Endothelial cell of umbilical vein (primary cell): ENCODE measurements at regions of chr2 and their contacts with region 1.

Region 1: GRCh38 chr2:191677646-191678436 is at the start of gene NABP1:
- DNase-seq: peak; percentile 97
- H3K4me3 ChIP-seq: peak within 1 kb of the TSS; percentile 54 to 93 (median 88)
- H3K27ac ChIP-seq: peak within 1 kb of the TSS; percentile 97
- H3K4me1 ChIP-seq: peaks cover 48% of the 10 kb centered on the region
- H3K27me3 ChIP-seq: no peaks in the 10 kb centered on the region
- CTCF ChIP-seq: no peak
- POLR2A ChIP-seq: peak; percentile 100
- total RNA-seq, gene NABP1: 42.4 and 47.6 TPM in 2 replicates

Region 2: GRCh38 chr2:191382801-191383200 is 295.0 kb before region 1 on chr2:
- CTCF ChIA-PET with region 1: no interaction called
- POLR2A ChIA-PET with region 1: no interaction called
- dilution Hi-C with region 1: no loop called
- intact Hi-C with region 1: loop called (anchors 5 kb)
- DNase-seq: peak; percentile 78
- H3K4me3 ChIP-seq: no peak overlapping the region
- H3K27ac ChIP-seq: peak overlapping the region; percentile 23
- H3K4me1 ChIP-seq: peaks cover 53% of the 10 kb centered on the region
- H3K27me3 ChIP-seq: no peaks in the 10 kb centered on the region
- CTCF ChIP-seq: no peak
- POLR2A ChIP-seq: no peak

Region 3: GRCh38 chr2:191611614-191612013 is 66.2 kb before region 1 on chr2:
- CTCF ChIA-PET with region 1: no interaction called
- POLR2A ChIA-PET with region 1: interaction called, 4 read pairs
- dilution Hi-C with region 1: no loop called
- intact Hi-C with region 1: loop called (anchors 2 kb)
- DNase-seq: no peak
- H3K4me3 ChIP-seq: no peak overlapping the region
- H3K27ac ChIP-seq: no peak overlapping the region
- H3K4me1 ChIP-seq: peaks cover 9% of the 10 kb centered on the region
- H3K27me3 ChIP-seq: no peaks in the 10 kb centered on the region
- CTCF ChIP-seq: no peak
- POLR2A ChIP-seq: no peak

Region 4: DNA sequence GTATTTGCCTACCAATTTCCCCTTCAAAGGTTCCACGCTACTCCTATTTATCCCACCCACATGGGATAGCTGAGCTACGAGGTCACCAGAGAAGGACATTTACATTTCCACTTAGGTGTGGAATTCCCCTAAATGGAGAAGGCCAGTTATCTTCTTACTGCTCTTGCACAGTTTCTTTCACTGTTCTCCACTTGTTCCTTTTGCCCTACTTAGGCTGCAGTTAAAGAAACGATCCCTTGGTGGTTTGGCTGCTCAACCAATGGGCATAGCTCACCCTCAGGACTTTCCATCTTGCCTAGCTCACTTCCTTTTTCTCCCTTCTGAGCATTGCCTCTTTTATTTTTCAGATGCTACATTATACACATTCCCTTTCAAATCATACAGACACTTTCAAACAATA is 11.1 kb before region 1 on chr2:
- CTCF ChIA-PET with region 1: interaction called, 4 read pairs
- POLR2A ChIA-PET with region 1: interaction called, 15 read pairs
- dilution Hi-C with region 1: no loop called
- intact Hi-C with region 1: no loop called
- DNase-seq: no peak
- H3K4me3 ChIP-seq: no peak overlapping the region
- H3K27ac ChIP-seq: no peak overlapping the region
- H3K4me1 ChIP-seq: peaks cover 12% of the 10 kb centered on the region
- H3K27me3 ChIP-seq: no peaks in the 10 kb centered on the region
- CTCF ChIP-seq: no peak
- POLR2A ChIP-seq: no peak

Region 5: DNA sequence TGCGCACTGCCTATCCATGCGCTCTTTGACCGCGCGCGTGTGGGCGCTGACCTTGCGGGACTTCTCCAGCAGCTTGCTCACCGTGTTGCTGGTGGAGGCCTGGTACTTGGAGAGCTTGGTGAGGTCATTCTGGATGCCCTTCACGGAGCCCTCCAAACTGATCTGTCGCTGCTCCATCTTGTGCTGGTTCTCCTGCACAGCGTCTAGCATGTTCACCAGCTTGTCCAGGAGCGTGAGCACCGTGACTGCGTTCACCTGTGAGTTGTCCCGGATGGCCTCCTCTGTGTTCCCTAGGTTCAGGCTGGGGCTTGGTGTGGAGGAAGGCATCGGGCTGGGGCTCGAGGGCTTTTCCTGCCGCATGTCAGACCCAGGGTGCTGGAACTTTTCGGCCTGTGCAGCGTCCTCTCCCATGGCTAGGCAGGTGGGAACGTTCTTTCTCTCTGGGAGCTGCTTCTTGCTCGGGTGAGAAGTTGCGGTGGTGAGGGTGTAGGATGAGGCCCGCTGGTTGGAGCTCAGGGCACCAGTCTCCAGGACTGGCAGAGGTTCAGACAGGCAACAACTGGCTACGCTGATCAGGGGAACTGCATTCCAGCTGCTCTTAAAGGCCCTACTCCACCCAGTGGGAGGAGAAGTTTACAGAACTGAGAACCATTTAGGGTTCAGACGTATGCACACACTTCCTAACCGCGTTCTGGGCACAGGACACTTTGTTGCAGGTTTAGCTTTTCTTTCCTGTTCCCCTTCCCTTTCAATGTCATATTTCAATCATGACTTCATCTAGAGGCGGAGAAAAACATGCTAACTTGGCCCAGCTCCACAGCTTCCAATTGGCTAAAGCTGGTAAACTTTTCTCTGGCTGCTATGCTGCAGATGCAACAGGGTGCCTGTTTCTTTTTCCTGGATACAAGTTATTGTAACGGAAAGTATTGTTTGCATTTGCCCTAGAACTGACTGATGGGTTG is 169.0 kb after region 1 on chr2 and contains the start of gene CAVIN2:
- CTCF ChIA-PET with region 1: no interaction called
- POLR2A ChIA-PET with region 1: interaction called, 5 read pairs
- dilution Hi-C with region 1: no loop called
- intact Hi-C with region 1: loop called (anchors 5 kb)
- DNase-seq: peak; percentile 100
- H3K4me3 ChIP-seq: peak within 1 kb of the TSS; percentile 82 to 99 (median 95)
- H3K27ac ChIP-seq: peak within 1 kb of the TSS; percentile 76
- H3K4me1 ChIP-seq: peaks cover 21% of the 10 kb centered on the region
- H3K27me3 ChIP-seq: no peaks in the 10 kb centered on the region
- CTCF ChIP-seq: peak in 1 of 2 donors; percentile 17
- POLR2A ChIP-seq: peak; percentile 98
- total RNA-seq, gene CAVIN2: 171 and 202 TPM in 2 replicates

Region 6: DNA sequence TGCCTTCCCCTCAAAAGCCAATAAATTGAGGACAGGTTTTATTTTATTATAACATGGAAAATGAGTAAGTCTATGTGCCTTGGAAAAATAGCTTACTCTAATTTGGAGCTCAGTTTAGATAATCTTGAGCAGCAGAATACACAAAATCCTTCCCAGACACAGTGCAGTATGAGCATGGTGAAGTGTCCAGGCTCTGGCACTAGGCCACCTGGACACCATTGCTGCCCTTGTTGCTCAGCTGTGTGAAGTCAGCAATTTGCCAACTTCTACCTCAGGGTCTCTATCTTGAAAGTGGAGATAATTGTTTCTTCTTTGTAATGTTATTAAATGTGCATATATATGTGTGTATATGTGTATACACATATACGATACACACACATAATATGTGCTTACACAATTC is 274.0 kb after region 1 on chr2:
- CTCF ChIA-PET with region 1: no interaction called
- POLR2A ChIA-PET with region 1: no interaction called
- dilution Hi-C with region 1: no loop called
- intact Hi-C with region 1: no loop called
- DNase-seq: no peak
- H3K4me3 ChIP-seq: no peak overlapping the region
- H3K27ac ChIP-seq: no peak overlapping the region
- H3K4me1 ChIP-seq: peaks cover 6% of the 10 kb centered on the region
- H3K27me3 ChIP-seq: no peaks in the 10 kb centered on the region
- CTCF ChIP-seq: no peak
- POLR2A ChIP-seq: no peak